ENCODE measurements at regions of chr4 and their contacts with region 1.

Region 1: GRCh38 chr4:56907489-56908205 is at the start of gene REST:
- DNase-seq: peak; percentile 59 to 87
- H3K4me3 ChIP-seq: peak within 1 kb of the TSS; percentile 93 to 98
- H3K27ac ChIP-seq: peak within 1 kb of the TSS; percentile 81 to 88
- H3K4me1 ChIP-seq: peaks cover 0 to 34% (median 17%) of the 10 kb centered on the region in 4 donors
- H3K27me3 ChIP-seq: no peaks in the 10 kb centered on the region
- CTCF ChIP-seq: no peak

Region 2: GRCh38 chr4:56977321-56978012 is 69.8 kb after region 1 on chr4 and contains the start of gene NOA1:
- intact Hi-C with region 1: loop called (anchors 5 kb)
- DNase-seq: peak; percentile 98 to 99
- H3K4me3 ChIP-seq: peak within 1 kb of the TSS; percentile 75 to 97
- H3K27ac ChIP-seq: peak within 1 kb of the TSS; percentile 80 to 89
- H3K4me1 ChIP-seq: peaks cover 0 to 52% (median 44%) of the 10 kb centered on the region in 4 donors
- H3K27me3 ChIP-seq: no peaks in the 10 kb centered on the region
- CTCF ChIP-seq: no peak